Activated CD4-positive, alpha-beta T cell treated with anti-CD3 and anti-CD28 coated beads for 36 hours (primary cell): ENCODE measurements at regions of chr1 and their contacts with region 1.

Region 1: GRCh38 chr1:21344750-21345443 is 54.6 kb upstream of the ECE1 start:
- DNase-seq: peak; percentile 44
- ATAC-seq: peak; percentile 17
- H3K4me3 Mint-ChIP-seq: no peak overlapping the region
- H3K27ac Mint-ChIP-seq: peak overlapping the region; percentile 95
- H3K4me1 Mint-ChIP-seq: peaks cover 39% of the 10 kb centered on the region
- H3K27me3 Mint-ChIP-seq: no peaks in the 10 kb centered on the region

Region 2: DNA sequence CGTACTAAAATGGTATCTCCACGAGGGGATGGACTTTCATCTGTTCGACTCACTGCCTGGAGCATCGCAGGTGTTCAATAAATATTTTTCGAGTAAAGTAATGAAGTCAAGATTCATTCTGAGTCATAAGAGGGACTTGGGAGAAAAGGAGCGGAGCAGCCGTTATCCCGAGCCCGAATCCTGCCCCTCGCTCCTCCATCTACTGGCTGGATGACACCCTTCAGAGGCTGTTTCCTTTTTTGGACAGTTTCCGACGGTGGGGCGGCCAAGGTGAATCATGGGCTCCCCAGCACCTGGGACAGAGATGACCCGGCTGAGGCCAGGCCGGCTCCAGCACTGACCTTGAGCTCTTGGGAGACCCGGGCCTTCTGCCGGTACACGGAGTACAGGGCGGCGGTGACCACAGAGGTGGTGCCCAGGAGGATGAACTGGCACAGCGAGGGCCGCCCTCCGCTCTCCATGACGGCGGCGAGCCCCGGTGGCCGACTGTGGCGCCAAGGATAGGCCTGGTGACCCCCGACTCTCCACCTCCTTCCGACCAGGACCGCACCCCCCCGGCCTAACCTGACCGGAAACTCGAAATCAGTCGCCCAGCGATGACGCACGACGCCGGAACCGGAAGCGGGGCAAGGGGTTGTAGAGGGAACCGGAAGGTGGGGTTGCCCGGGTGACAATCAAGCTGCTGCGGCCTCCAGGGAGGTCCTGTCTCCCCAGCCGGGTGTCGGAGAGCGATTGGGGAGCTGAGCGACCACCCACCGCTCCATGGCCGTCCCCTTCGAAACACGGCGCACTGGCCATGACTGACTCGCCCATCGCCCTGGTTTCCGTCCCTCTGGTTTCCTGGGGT is 837.1 kb before region 1 on chr1 and contains the start of gene MUL1:
- CTCF ChIA-PET with region 1: no interaction called
- POLR2A ChIA-PET with region 1: no interaction called
- intact Hi-C with region 1: loop called in 1 of 2 experiments (anchors 10 kb)
- DNase-seq: peak; percentile 96
- ATAC-seq: peak; percentile 96
- H3K4me3 Mint-ChIP-seq: peak within 1 kb of the TSS; percentile 79
- H3K27ac Mint-ChIP-seq: peak within 1 kb of the TSS; percentile 65
- H3K4me1 Mint-ChIP-seq: peaks cover 17% of the 10 kb centered on the region
- H3K27me3 Mint-ChIP-seq: peaks cover 2% of the 10 kb centered on the region
- total RNA-seq, gene MUL1: 9.0 to 13.1 TPM

Region 3: DNA sequence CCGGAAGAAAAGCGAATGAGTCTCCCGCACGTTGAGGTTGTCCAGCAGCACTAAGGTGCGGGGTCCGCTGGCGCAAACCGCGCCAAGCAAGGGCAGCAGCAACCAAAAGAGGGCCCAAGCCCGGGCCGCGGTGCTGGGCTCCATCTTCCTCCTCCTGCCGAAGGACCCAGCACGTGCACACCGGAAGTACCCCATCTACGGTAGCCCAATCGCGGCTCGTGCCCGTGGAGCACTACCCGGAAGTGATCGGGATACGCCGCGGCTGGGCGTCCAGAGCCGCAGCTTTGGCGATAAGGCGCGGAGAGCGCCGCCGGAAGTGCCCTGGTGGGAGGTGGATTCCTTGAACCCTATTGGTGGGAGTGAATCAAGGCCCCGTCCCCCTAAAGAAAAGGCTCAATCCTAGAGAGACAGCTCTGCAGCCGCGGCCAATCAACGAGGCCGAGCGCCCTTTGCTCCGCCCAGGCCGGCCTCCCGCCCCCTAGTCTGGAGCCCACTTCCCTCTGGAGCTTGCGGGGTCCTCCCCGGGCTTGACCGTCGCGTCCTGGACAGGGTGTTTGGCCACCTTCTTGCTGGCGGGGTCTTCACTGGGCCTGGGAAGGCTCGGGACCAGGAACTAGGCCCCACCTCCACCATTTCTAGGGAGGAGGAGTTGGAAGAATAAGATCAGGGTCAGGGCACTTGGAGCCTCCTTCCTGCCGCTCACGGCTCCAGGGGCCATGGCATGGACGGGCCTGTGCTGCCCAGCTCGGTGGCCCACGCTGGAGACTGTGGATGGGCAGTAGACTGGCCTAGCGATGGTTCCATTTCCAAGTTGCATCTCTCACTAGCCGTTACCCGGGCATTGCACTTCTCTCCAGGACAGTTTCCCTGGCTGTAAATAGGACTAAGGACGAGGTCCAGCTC is 683.4 kb before region 1 on chr1 and contains the start of gene DDOST:
- CTCF ChIA-PET with region 1: no interaction called
- POLR2A ChIA-PET with region 1: no interaction called
- intact Hi-C with region 1: loop called in 1 of 2 experiments (anchors 2 kb)
- DNase-seq: peak; percentile 97
- ATAC-seq: peak; percentile 97
- H3K4me3 Mint-ChIP-seq: peak within 1 kb of the TSS; percentile 91
- H3K27ac Mint-ChIP-seq: peak within 1 kb of the TSS; percentile 100
- H3K4me1 Mint-ChIP-seq: peaks cover 35% of the 10 kb centered on the region
- H3K27me3 Mint-ChIP-seq: no peaks in the 10 kb centered on the region
- total RNA-seq, gene DDOST: 112 to 136 TPM

Region 4: DNA sequence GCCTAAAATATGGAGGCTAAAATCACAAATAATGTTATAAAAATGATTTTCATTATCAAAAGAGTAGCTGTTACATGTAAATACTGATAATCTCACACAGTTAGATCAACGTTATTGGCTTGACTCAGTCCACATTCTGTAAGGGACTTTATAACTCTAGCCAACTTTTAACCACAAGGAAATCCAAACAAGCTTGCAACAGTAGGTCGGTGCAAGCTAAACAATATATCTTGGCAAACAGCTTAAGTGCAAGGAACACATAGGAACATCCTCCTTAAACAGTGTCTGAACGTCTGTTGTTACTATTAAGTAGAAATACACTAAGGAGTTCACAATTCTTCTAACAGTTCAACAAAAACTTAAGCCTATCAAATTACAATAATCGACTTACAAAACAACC is 294.9 kb before region 1 on chr1:
- CTCF ChIA-PET with region 1: no interaction called
- POLR2A ChIA-PET with region 1: no interaction called
- intact Hi-C with region 1: no loop called
- DNase-seq: no peak
- ATAC-seq: no peak
- H3K4me3 Mint-ChIP-seq: no peak overlapping the region
- H3K27ac Mint-ChIP-seq: no peak overlapping the region
- H3K4me1 Mint-ChIP-seq: no peaks in the 10 kb centered on the region
- H3K27me3 Mint-ChIP-seq: no peaks in the 10 kb centered on the region

Region 5: GRCh38 chr1:21106709-21107108 is 238.2 kb before region 1 on chr1:
- CTCF ChIA-PET with region 1: no interaction called
- POLR2A ChIA-PET with region 1: no interaction called
- intact Hi-C with region 1: no loop called
- DNase-seq: no peak
- ATAC-seq: no peak
- H3K4me3 Mint-ChIP-seq: no peak overlapping the region
- H3K27ac Mint-ChIP-seq: no peak overlapping the region
- H3K4me1 Mint-ChIP-seq: no peaks in the 10 kb centered on the region
- H3K27me3 Mint-ChIP-seq: no peaks in the 10 kb centered on the region

Region 6: DNA sequence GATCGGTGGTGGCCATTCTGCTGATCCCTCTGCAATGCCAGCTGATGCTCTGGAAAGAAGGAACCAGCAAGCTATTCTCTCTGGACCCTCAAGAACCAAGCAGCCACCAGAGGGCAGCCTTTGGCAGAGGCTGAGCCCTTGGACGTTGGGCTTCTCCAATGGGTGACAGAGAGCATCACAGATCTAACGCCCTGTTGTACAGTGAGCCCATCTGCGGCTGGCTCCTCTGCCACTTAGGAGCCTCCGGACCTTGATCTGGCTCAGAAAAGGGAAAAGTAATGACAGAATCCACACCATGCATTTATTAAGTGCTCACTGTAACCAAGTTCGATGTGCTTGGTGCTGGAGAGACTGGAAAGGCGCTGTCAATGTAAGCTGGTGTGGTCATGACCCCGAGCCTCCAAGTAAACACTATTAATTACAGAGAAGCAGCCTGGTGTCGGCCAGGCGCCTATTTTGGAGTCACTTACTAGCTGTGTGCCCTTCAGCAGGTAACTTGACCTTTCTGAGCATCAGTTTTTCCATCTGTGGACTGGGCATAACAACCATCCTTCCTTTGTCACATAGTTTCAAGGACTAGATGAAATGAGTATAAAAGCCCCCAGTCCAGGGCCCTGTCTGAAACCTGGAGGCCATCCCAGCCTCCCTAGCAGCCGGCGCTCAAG is 89.5 kb before region 1 on chr1:
- CTCF ChIA-PET with region 1: interaction called, 6 read pairs
- POLR2A ChIA-PET with region 1: no interaction called
- intact Hi-C with region 1: loop called (anchors 1 to 5 kb)
- DNase-seq: peak; percentile 90
- ATAC-seq: peak; percentile 64
- H3K4me3 Mint-ChIP-seq: no peak overlapping the region
- H3K27ac Mint-ChIP-seq: peak overlapping the region; percentile 84
- H3K4me1 Mint-ChIP-seq: peaks cover 48% of the 10 kb centered on the region
- H3K27me3 Mint-ChIP-seq: no peaks in the 10 kb centered on the region

Region 7: GRCh38 chr1:21301794-21302440 is 43.0 kb before region 1 on chr1:
- CTCF ChIA-PET with region 1: no interaction called
- POLR2A ChIA-PET with region 1: no interaction called
- intact Hi-C with region 1: no loop called
- DNase-seq: no peak
- ATAC-seq: no peak
- H3K4me3 Mint-ChIP-seq: no peak overlapping the region
- H3K27ac Mint-ChIP-seq: no peak overlapping the region
- H3K4me1 Mint-ChIP-seq: peaks cover 82% of the 10 kb centered on the region
- H3K27me3 Mint-ChIP-seq: no peaks in the 10 kb centered on the region

Region 8: GRCh38 chr1:21324368-21325141 is 20.3 kb before region 1 on chr1:
- CTCF ChIA-PET with region 1: interaction called, 4 read pairs
- POLR2A ChIA-PET with region 1: interaction called, 5 read pairs
- intact Hi-C with region 1: loop called (anchors 1 kb)
- DNase-seq: peak; percentile 90
- ATAC-seq: peak; percentile 87
- H3K4me3 Mint-ChIP-seq: peak overlapping the region; percentile 57
- H3K27ac Mint-ChIP-seq: peak overlapping the region; percentile 84
- H3K4me1 Mint-ChIP-seq: peaks cover 81% of the 10 kb centered on the region
- H3K27me3 Mint-ChIP-seq: no peaks in the 10 kb centered on the region

Region 9: DNA sequence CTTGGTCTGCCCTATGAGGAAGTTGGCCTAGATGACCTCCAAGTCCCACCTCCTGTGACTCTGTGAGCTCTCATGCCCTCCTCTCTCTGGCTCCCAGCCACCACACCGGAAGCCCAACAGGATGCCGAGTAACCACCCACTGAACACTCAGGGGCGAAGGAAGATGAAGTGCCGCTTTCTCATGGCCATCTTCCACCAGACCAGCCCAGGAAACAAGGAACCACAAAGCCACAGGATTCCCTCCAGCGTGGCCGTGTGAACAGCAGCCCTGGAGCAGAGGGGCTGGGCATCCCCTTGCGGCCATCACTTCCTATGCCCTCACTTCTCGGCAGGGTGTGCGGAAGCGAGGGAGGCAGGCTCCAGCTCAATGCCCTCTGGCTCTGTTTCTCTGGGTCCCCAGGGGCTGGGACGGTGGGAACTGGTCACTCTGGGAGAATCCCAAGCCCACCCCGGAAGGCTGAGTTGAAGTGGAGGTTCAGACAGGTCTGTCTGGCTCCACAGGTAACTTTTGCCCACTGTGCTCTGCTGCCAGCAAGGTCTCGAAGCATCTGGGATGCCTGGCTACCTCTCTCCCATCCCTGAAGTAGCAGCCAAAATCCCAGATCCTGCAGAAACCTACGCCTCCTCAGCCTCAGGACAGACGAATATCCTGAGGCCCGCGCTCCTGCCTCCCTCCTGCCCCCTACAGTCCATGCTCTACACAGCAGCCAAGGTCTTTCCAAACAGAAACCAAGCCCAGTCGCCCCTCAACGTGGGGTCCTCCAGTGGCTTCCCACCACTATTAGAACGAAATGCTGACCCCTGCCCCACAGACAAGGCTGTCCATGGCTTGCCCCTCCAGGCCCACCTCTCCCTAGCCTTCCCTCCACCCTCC is 10.4 kb before region 1 on chr1:
- CTCF ChIA-PET with region 1: interaction called, 6 read pairs
- POLR2A ChIA-PET with region 1: interaction called, 4 read pairs
- intact Hi-C with region 1: loop called in 1 of 2 experiments (anchors 1 kb)
- DNase-seq: peak; percentile 87
- ATAC-seq: peak; percentile 84
- H3K4me3 Mint-ChIP-seq: peak overlapping the region; percentile 80
- H3K27ac Mint-ChIP-seq: peak overlapping the region; percentile 97
- H3K4me1 Mint-ChIP-seq: peaks cover 97% of the 10 kb centered on the region
- H3K27me3 Mint-ChIP-seq: no peaks in the 10 kb centered on the region

Region 10: DNA sequence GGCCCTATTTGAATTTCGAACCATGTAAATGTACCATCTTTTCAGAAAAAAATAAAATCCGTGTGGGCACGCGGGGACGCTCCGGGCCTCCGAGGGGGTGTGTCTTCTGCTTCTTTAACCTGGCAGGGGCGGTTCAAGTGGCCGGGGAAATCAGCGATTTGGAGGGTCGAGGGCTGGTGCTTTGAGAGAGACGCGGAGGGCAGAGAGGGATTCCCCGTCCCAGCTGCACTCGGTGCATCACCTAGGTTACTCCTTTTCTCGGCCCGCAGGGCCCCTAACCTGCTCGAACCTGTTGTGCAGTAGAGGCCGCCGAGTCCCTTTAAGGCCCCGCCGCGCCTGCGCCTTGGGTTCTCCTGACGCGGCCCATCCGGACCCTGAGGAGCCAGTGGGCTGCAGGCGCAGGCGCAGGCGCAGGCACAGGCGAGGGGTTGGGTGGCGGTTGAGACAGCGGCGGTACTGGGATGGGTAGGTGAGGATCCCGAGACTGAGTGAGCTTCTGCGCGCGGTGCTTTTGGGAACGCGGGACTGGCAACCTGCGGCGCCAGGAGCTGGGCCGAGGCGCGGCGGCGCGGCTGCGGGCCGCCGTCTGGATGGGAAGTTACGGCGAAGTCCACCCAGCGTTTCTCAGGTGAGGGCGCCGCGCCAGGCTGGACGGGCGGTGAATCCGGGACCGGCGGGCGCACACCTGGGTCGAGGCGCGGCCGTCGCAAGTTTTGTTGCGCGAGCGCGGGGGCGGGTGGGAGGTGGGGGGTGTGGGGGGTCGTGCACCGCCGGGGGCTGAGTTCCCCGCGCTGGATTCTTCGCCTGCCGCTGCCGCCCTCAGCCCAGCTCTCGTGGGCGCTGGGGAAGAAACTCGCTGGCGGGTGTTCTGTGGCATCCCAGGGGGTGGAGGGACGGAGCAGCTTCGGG is 95.1 kb after region 1 on chr1 and contains the start of gene NBPF3:
- CTCF ChIA-PET with region 1: no interaction called
- POLR2A ChIA-PET with region 1: interaction called, 3 read pairs
- intact Hi-C with region 1: loop called in 1 of 2 experiments (anchors 1 kb)
- DNase-seq: peak; percentile 96
- ATAC-seq: peak; percentile 98
- H3K4me3 Mint-ChIP-seq: peak within 1 kb of the TSS; percentile 91
- H3K27ac Mint-ChIP-seq: peak within 1 kb of the TSS; percentile 93
- H3K4me1 Mint-ChIP-seq: peaks cover 17% of the 10 kb centered on the region
- H3K27me3 Mint-ChIP-seq: peaks cover 3% of the 10 kb centered on the region
- total RNA-seq, gene NBPF3: 8.5 to 9.9 TPM